ENCODE measurements at regions of chr4 and their contacts with region 1.

Region 1: GRCh38 chr4:11418610-11419009 is 10.1 kb downstream of the HS3ST1 start:
- DNase-seq: peak; percentile 21
- H3K4me3 ChIP-seq: no peak overlapping the region
- H3K27ac ChIP-seq: no peak overlapping the region
- H3K4me1 ChIP-seq: no peaks in the 10 kb centered on the region
- H3K27me3 ChIP-seq: no peaks in the 10 kb centered on the region
- CTCF ChIP-seq: peak; percentile 40 to 55
- POLR2A ChIP-seq: no peak

Region 2: DNA sequence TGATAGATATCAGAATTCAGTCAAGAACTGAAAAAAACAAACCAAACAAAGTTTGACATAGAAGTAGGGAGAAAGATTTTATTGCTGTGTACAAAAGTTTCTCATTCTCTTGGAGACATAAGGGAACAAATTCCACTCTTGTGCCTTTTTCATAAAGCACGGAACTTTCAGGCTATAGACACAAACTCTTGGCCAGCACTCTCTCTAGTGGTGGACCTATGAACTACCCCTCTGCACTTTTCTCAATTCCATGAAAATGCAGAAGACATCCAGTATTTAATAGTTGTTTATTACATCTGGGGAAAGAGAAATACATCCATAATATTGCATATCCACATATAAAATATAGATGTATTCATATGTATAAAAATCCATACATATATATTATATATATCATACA is 301.7 kb after region 1 on chr4:
- CTCF ChIA-PET with region 1: interaction called, 7 read pairs
- POLR2A ChIA-PET with region 1: no interaction called
- dilution Hi-C with region 1: no loop called
- intact Hi-C with region 1: loop called (anchors 1 kb)
- DNase-seq: peak; percentile 62
- H3K4me3 ChIP-seq: no peak overlapping the region
- H3K27ac ChIP-seq: no peak overlapping the region
- H3K4me1 ChIP-seq: peaks cover 9% of the 10 kb centered on the region
- H3K27me3 ChIP-seq: no peaks in the 10 kb centered on the region
- CTCF ChIP-seq: peak; percentile 62 to 77
- POLR2A ChIP-seq: no peak